WTC11 (cell line): ENCODE measurements at regions of chr10 and their contacts with region 1.

Region 1: DNA sequence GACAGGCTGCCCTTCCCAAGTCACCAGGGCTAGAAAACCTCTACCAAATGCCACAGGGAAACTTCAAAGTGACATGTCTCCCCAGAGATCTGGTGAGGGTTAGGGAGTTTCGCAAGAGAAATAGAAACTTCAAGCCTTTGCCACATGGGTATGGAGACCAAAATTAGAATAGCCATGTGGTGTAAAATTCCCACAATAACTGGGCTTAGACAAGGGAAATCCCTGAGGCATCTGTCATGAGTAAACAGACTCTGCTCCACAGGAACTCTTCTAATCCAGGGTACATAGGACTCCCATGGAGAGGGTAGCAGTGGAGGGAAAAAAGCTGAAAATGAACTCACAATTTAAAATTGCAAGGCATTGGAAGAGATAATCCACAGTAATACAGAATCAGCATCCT is 14.3 kb downstream of the ADAM12 start:
- DNase-seq: no peak
- ATAC-seq: no peak
- H3K4me3 Mint-ChIP-seq: no peak overlapping the region
- H3K27ac Mint-ChIP-seq: no peak overlapping the region
- H3K4me1 Mint-ChIP-seq: peaks cover 3% of the 10 kb centered on the region; the same call in 1 of the 2 replicates
- H3K27me3 Mint-ChIP-seq: no peaks in the 10 kb centered on the region
- CTCF ChIP-seq: no peak

Region 2: GRCh38 chr10:126218174-126218573 is 155.8 kb before region 1 on chr10:
- CTCF ChIA-PET with region 1: no interaction called
- POLR2A ChIA-PET with region 1: interaction called, 14 read pairs
- DNase-seq: no peak
- ATAC-seq: no peak
- H3K4me3 Mint-ChIP-seq: no peak overlapping the region
- H3K27ac Mint-ChIP-seq: no peak overlapping the region
- H3K4me1 Mint-ChIP-seq: peaks cover 18% of the 10 kb centered on the region
- H3K27me3 Mint-ChIP-seq: no peaks in the 10 kb centered on the region
- CTCF ChIP-seq: no peak

Region 3: GRCh38 chr10:126439947-126440346 is 66.0 kb after region 1 on chr10:
- CTCF ChIA-PET with region 1: no interaction called
- POLR2A ChIA-PET with region 1: no interaction called
- DNase-seq: no peak
- ATAC-seq: 0 out of 2 replicates have a peak, but pooled peaks have one; percentile 18
- H3K4me3 Mint-ChIP-seq: no peak overlapping the region
- H3K27ac Mint-ChIP-seq: no peak overlapping the region
- H3K4me1 Mint-ChIP-seq: peaks cover 4% of the 10 kb centered on the region
- H3K27me3 Mint-ChIP-seq: no peaks in the 10 kb centered on the region; the same call in 1 of the 2 replicates
- CTCF ChIP-seq: no peak